Activated CD8-positive, alpha-beta T cell treated with anti-CD3 and anti-CD28 coated beads for 36 hours (primary cell): ENCODE measurements at regions of chr10 and their contacts with region 1.

Region 1: DNA sequence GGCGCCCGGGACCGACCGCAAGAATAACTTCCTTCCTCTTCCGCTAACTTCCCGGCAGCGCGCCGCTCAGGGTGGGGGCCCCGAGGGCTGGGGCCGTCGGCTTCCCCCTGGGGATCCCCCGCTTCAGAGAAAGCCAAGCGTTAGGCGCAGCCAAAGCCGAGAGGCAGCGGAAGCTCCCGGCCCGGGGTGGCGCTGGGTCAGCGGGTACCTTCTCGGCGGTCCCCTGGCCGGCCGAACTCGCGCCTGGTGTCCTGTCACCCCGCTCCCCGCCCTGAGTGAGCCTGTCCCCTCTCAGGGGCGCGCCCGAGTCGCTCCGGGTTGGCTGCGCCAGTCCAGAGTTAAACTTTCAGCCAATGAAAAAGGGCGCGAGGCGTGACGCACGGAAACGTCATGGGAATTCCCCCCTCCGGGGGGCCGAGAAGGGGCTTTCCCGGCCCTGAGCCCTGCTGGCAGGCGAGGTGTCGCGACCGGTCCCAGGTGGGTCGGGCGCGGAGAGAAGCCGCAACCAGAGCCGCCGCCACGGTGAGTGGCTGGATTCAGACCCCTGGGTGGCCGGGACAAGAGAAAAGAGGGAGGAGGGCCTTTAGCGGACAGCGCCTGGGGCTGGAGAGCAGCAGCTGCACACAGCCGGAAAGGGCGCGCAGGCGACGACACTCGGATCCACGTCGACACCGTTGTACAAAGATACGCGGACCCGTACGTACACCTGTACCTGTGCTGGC is 1.3 kb upstream of the NFKB2 start:
- DNase-seq: peak; percentile 98
- ATAC-seq: peak; percentile 85
- H3K4me3 Mint-ChIP-seq: peak overlapping the region; percentile 93
- H3K27ac Mint-ChIP-seq: peak overlapping the region; percentile 98
- H3K4me1 Mint-ChIP-seq: peaks cover 44% of the 10 kb centered on the region
- H3K27me3 Mint-ChIP-seq: no peaks in the 10 kb centered on the region
- CTCF ChIP-seq: no peak

Region 2: GRCh38 chr10:102167861-102168260 is 226.4 kb before region 1 on chr10:
- CTCF ChIA-PET with region 1: interaction called, 10 read pairs
- POLR2A ChIA-PET with region 1: interaction called, 4 read pairs
- intact Hi-C with region 1: no loop called
- DNase-seq: no peak
- ATAC-seq: no peak
- H3K4me3 Mint-ChIP-seq: no peak overlapping the region
- H3K27ac Mint-ChIP-seq: no peak overlapping the region
- H3K4me1 Mint-ChIP-seq: peaks cover 5% of the 10 kb centered on the region
- H3K27me3 Mint-ChIP-seq: no peaks in the 10 kb centered on the region
- CTCF ChIP-seq: no peak

Region 3: DNA sequence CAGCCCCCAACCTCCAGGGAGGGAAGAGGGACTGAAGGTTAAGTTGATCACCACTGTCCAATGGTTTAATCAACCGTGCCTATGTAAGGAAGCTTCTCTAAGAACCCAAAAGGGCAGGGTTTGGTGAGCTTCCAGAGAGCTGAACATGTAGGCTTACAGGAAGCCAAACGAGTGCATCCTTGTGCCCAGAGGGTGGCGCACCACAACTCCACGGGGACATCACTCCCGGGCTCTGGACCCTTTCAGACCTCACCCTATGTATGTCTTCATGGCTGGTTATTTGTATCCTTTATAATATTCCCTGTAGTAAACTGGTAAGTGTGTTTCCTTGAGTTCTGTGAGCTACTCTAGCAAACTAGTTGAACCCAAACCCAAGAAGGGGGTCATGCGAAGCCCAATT is 10.2 kb before region 1 on chr10:
- CTCF ChIA-PET with region 1: interaction called, 36 read pairs
- POLR2A ChIA-PET with region 1: interaction called, 22 read pairs
- intact Hi-C with region 1: no loop called
- DNase-seq: peak; percentile 49
- ATAC-seq: peak; percentile 49
- H3K4me3 Mint-ChIP-seq: no peak overlapping the region
- H3K27ac Mint-ChIP-seq: no peak overlapping the region
- H3K4me1 Mint-ChIP-seq: peaks cover 3% of the 10 kb centered on the region
- H3K27me3 Mint-ChIP-seq: no peaks in the 10 kb centered on the region
- CTCF ChIP-seq: peak; percentile 29

Region 4: GRCh38 chr10:102420810-102421644 is 26.8 kb after region 1 on chr10 and contains the start of gene FBXL15:
- CTCF ChIA-PET with region 1: interaction called, 143 read pairs
- POLR2A ChIA-PET with region 1: interaction called, 44 read pairs
- intact Hi-C with region 1: no loop called
- DNase-seq: peak; percentile 98
- ATAC-seq: peak; percentile 85
- H3K4me3 Mint-ChIP-seq: peak within 1 kb of the TSS; percentile 87
- H3K27ac Mint-ChIP-seq: peak within 1 kb of the TSS; percentile 91
- H3K4me1 Mint-ChIP-seq: peaks cover 27% of the 10 kb centered on the region
- H3K27me3 Mint-ChIP-seq: peaks cover 14% of the 10 kb centered on the region
- CTCF ChIP-seq: no peak
- total RNA-seq, gene FBXL15: 14.1 to 15.7 TPM

Region 5: DNA sequence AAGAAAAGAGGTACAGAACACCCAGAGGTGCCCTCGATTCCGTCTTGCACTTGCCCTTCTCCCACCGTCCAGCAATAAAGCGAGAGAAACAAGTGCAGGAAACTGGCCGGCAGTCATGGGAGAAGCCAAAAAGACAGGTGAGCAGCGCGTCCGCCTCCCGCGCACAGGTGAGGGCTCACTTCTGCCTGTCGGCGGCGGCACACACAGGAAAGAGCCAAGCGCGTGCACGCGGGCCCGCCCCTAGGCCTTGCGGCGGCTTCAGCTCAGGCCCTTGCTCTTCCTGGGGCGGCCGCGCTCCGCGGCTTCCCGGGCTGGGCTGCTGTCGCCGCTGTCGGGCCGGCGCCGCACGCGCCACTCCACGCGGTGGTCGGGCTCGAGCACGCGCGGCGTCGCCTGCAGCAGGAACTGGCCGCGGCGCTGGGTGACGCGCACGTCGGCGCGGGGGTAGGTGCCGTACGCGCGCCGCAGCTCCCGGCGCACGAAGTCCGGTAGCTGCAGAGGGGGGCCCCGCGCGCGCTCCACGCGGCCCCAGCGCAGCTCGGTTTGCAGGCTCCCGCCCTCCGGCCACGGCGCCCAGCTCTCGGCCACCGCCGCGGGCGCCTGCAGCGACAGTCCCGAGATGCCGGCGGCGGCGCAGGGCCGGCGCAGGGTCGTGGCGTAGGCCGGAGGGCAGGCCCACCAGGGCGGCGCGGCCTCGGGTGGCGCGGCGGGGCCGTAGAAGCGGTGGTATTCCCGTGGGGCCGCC is 56.1 kb after region 1 on chr10:
- CTCF ChIA-PET with region 1: interaction called, 19 read pairs
- POLR2A ChIA-PET with region 1: interaction called, 49 read pairs
- intact Hi-C with region 1: no loop called
- DNase-seq: peak; percentile 87
- ATAC-seq: peak; percentile 60
- H3K4me3 Mint-ChIP-seq: peak overlapping the region; percentile 96
- H3K27ac Mint-ChIP-seq: peak overlapping the region; percentile 94
- H3K4me1 Mint-ChIP-seq: peaks cover 26% of the 10 kb centered on the region
- H3K27me3 Mint-ChIP-seq: no peaks in the 10 kb centered on the region
- CTCF ChIP-seq: no peak

Region 6: GRCh38 chr10:102476466-102477141 is 82.4 kb after region 1 on chr10:
- CTCF ChIA-PET with region 1: interaction called, 28 read pairs
- POLR2A ChIA-PET with region 1: interaction called, 14 read pairs
- intact Hi-C with region 1: loop called (anchors 2 kb)
- DNase-seq: peak; percentile 35
- ATAC-seq: no peak
- H3K4me3 Mint-ChIP-seq: no peak overlapping the region
- H3K27ac Mint-ChIP-seq: peak overlapping the region; percentile 77
- H3K4me1 Mint-ChIP-seq: peaks cover 29% of the 10 kb centered on the region
- H3K27me3 Mint-ChIP-seq: no peaks in the 10 kb centered on the region
- CTCF ChIP-seq: no peak

Region 7: GRCh38 chr10:103007017-103007416 is 612.8 kb after region 1 on chr10:
- CTCF ChIA-PET with region 1: no interaction called
- POLR2A ChIA-PET with region 1: no interaction called
- intact Hi-C with region 1: no loop called
- DNase-seq: no peak
- ATAC-seq: no peak
- H3K4me3 Mint-ChIP-seq: no peak overlapping the region
- H3K27ac Mint-ChIP-seq: no peak overlapping the region
- H3K4me1 Mint-ChIP-seq: no peaks in the 10 kb centered on the region
- H3K27me3 Mint-ChIP-seq: no peaks in the 10 kb centered on the region
- CTCF ChIP-seq: no peak